ENCODE measurements at regions of chr1 and their contacts with region 1.

Region 1: DNA sequence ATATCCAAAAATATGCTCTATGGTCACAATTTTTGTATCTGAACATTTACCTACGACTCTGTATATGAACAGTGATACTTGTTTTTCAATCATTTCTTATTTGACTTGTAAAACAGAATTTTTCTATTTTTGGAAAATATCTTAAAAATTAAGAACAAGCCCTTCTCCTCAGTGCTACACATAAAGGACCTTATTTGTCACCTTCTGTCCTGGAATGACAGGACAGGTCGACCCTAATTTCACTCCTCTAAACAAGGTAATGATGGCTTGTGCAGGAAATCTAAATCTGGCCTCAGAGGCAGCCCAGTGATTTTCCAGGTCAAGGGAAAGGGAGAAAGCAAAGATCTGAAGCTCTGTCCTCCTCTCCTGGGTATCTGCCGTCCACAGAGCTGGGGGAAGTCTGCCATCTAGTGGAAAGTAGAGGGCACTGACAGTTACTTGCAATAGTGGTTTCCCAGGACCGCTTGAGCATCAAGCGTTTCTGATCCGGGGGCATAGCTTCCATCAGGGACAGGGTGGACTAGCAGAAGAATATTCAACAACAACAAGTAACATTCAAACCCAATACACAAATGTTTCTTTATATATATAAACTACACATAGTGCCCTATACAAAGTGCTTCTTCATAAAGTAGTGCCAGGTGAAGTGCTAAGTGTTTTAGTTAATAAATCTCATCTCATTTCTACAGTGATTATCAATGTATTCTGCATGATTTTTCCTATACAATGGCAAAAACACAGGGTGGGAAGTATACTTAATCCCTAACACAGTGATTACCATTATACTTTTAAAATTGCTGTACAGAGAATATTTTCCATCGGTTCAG is 74.6 kb downstream of the SLC25A24 start:
- DNase-seq: peak; percentile 85
- ATAC-seq: peak; percentile 92
- H3K4me3 ChIP-seq: no peak overlapping the region
- H3K4me3 Mint-ChIP-seq: no peak overlapping the region
- H3K27ac ChIP-seq: no peak overlapping the region
- H3K27ac Mint-ChIP-seq: no peak overlapping the region
- H3K4me1 ChIP-seq: peaks cover 5 to 8% of the 10 kb centered on the region in 2 donors
- H3K4me1 Mint-ChIP-seq: peaks cover 4% of the 10 kb centered on the region
- H3K27me3 ChIP-seq: no peaks in the 10 kb centered on the region
- H3K27me3 Mint-ChIP-seq: peaks cover under 1% of the 10 kb centered on the region
- CTCF ChIP-seq: peak; percentile 96

Region 2: GRCh38 chr1:107688354-107688753 is 437.2 kb before region 1 on chr1:
- CTCF ChIA-PET with region 1: no interaction called
- POLR2A ChIA-PET with region 1: no interaction called
- intact Hi-C with region 1: no loop called
- DNase-seq: no peak
- ATAC-seq: no peak
- H3K4me3 ChIP-seq: no peak overlapping the region
- H3K4me3 Mint-ChIP-seq: no peak overlapping the region
- H3K27ac ChIP-seq: no peak overlapping the region
- H3K27ac Mint-ChIP-seq: no peak overlapping the region
- H3K4me1 ChIP-seq: no peaks in the 10 kb centered on the region
- H3K4me1 Mint-ChIP-seq: no peaks in the 10 kb centered on the region
- H3K27me3 ChIP-seq: no peaks in the 10 kb centered on the region
- H3K27me3 Mint-ChIP-seq: no peaks in the 10 kb centered on the region
- CTCF ChIP-seq: no peak

Region 3: DNA sequence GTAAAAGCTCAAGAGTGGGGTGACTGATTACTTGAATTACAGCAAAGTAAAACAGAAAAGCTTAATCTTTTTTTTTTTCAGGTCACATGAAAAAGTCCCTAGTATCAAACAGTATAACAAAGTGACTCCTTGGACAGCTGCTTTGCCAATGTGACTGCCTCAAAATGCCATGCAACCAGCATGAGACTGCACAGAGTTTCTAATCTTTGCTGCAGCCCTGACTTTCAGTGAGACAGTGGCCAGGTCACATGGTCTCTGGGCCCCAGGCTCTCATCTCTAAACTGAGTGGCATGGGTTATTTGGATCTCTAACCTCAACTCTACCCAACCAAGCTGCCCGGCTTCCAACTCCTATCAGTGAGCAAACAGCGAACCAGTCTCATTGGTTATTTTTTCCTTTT is 329.5 kb before region 1 on chr1:
- CTCF ChIA-PET with region 1: interaction called, 709 read pairs
- POLR2A ChIA-PET with region 1: no interaction called
- intact Hi-C with region 1: no loop called
- DNase-seq: peak; percentile 40
- ATAC-seq: peak; percentile 40
- H3K4me3 ChIP-seq: peak overlapping the region in 1 of 5 experiments; percentile 18
- H3K4me3 Mint-ChIP-seq: peak overlapping the region; percentile 62
- H3K27ac ChIP-seq: peak overlapping the region; percentile 61 to 88
- H3K27ac Mint-ChIP-seq: peak overlapping the region; percentile 42
- H3K4me1 ChIP-seq: peaks cover 68 to 84% of the 10 kb centered on the region in 2 donors
- H3K4me1 Mint-ChIP-seq: peaks cover 76% of the 10 kb centered on the region
- H3K27me3 ChIP-seq: no peaks in the 10 kb centered on the region
- H3K27me3 Mint-ChIP-seq: no peaks in the 10 kb centered on the region
- CTCF ChIP-seq: no peak

Region 4: DNA sequence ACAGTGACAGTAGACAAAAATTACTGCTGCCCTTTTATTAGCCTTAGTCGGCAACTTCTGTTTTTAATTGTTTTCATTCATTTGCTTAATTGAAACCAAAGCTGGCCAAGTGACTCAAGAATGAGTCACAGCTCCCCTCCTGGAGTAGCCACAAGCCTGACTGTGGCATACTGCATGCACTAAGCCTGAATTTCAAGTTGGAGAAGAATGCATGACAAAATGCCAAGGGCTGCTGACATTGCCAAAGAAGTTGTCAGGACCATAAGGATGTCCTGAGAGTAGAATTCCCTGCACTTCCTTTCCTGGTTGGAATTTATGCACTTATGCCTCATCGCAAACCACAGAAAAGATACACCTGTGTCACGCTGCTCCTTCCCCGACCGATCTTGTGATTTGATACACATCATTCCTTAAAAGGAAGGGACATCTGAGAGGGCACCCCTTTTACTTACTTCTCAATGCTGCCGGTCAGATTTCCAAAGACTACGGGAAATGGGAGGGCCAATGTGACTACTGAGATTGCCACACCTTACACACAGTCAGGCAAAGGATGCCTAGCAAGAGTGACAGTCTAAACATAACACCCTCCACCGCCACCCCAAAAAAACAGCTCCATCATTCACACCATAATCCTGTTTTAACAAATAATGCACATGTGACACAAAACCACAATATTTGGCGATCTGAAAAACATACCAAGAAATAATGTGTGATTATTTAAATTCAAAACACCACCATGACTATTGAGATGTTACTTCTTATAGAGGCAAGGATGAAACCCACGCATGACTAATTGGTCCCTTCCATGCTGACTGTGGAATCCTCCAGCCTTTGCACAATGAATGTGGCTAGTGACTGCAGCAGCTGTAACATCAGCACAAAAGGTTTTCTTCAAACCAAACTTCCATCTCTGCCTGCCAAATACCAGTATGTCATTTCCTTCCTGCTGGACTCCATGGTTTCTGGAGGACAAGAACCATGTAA is 188.7 kb before region 1 on chr1:
- CTCF ChIA-PET with region 1: interaction called, 3 read pairs
- POLR2A ChIA-PET with region 1: no interaction called
- intact Hi-C with region 1: loop called (anchors 10 kb)
- DNase-seq: peak; percentile 42
- ATAC-seq: peak; percentile 54
- H3K4me3 ChIP-seq: no peak overlapping the region
- H3K4me3 Mint-ChIP-seq: peak overlapping the region; percentile 69
- H3K27ac ChIP-seq: peak overlapping the region in 1 of 2 donors; percentile 3
- H3K27ac Mint-ChIP-seq: peak overlapping the region; percentile 78
- H3K4me1 ChIP-seq: peaks cover 50 to 56% of the 10 kb centered on the region in 2 donors
- H3K4me1 Mint-ChIP-seq: peaks cover 81% of the 10 kb centered on the region
- H3K27me3 ChIP-seq: no peaks in the 10 kb centered on the region
- H3K27me3 Mint-ChIP-seq: no peaks in the 10 kb centered on the region
- CTCF ChIP-seq: no peak

Region 5: GRCh38 chr1:108075055-108075454 is 50.5 kb before region 1 on chr1:
- CTCF ChIA-PET with region 1: interaction called, 10 read pairs
- POLR2A ChIA-PET with region 1: no interaction called
- intact Hi-C with region 1: loop called (anchors 5 kb)
- DNase-seq: peak; percentile 88
- ATAC-seq: peak; percentile 79
- H3K4me3 ChIP-seq: no peak overlapping the region
- H3K4me3 Mint-ChIP-seq: peak overlapping the region; percentile 42
- H3K27ac ChIP-seq: peak overlapping the region; percentile 67 to 71
- H3K27ac Mint-ChIP-seq: peak overlapping the region; percentile 80
- H3K4me1 ChIP-seq: peaks cover 44 to 57% of the 10 kb centered on the region in 2 donors
- H3K4me1 Mint-ChIP-seq: peaks cover 62% of the 10 kb centered on the region
- H3K27me3 ChIP-seq: no peaks in the 10 kb centered on the region
- H3K27me3 Mint-ChIP-seq: no peaks in the 10 kb centered on the region
- CTCF ChIP-seq: no peak

Region 6: DNA sequence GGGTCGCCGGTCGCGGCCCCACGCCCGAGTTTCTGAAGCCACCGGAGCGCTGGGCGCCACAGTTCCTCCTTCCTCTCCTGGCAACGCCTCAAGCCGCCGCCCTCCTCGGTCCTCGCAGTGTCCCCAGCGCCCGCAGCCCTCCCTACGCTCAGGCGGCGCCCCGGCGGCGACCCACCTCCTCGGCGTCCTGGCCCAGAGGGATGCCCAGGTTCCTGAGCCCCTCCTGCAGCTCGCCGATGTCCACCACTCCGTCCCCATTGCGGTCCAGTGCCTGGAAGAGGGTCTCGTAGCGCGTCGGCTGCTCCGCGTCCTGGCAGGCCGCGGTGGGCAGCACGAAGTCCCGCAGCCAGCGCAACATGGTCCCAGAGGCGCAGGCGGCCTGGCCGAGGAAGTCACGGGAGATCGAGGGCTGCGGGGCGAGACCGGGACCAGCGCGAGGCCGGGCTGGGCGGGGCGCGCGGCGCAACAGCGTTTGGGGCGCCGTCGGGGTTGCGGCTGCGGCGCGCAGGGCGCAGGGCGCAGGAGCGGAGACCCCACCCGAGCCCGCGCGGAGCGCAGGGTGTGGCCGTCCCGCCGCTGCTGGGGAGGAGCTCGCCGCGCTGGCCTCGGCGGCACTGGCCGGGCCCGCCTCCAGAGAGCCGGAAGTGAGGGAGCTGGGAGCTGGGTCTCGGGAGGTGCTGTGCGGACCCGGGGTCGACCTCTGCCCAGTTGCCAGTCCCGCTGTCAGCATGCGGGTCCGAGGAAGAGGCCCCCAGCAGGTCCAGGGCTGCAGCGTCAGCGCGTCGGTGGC is 74.5 kb after region 1 on chr1 and contains the start of gene SLC25A24:
- CTCF ChIA-PET with region 1: interaction called, 7 read pairs
- POLR2A ChIA-PET with region 1: no interaction called
- intact Hi-C with region 1: loop called (anchors 5 kb)
- DNase-seq: peak; percentile 85
- ATAC-seq: peak; percentile 95
- H3K4me3 ChIP-seq: peak within 1 kb of the TSS; percentile 85 to 96 (median 87)
- H3K4me3 Mint-ChIP-seq: peak within 1 kb of the TSS; percentile 93
- H3K27ac ChIP-seq: peak within 1 kb of the TSS; percentile 80 to 84
- H3K27ac Mint-ChIP-seq: peak within 1 kb of the TSS; percentile 94
- H3K4me1 ChIP-seq: peaks cover 13 to 16% of the 10 kb centered on the region in 2 donors
- H3K4me1 Mint-ChIP-seq: peaks cover 32% of the 10 kb centered on the region
- H3K27me3 ChIP-seq: no peaks in the 10 kb centered on the region
- H3K27me3 Mint-ChIP-seq: no peaks in the 10 kb centered on the region
- CTCF ChIP-seq: no peak
- total RNA-seq, gene SLC25A24: 25.3 and 25.6 TPM in 2 replicates